ENCODE measurements at regions of chr9 and their contacts with region 1.

Region 1: GRCh38 chr9:21576331-21577189 is 94.4 kb upstream of the IFNE start:
- DNase-seq: peak in 28 of 35 experiments; percentile 15 to 65 (median 42)
- ATAC-seq: peak; percentile 69 to 88 (median 74)
- H3K4me3 ChIP-seq: no peak overlapping the region
- H3K4me3 Mint-ChIP-seq: peak overlapping the region; percentile 25 to 59 (median 37)
- H3K27ac ChIP-seq: peak overlapping the region; percentile 61
- H3K27ac Mint-ChIP-seq: peak overlapping the region; percentile 89
- H3K4me1 ChIP-seq: peaks cover 4 to 30% of the 10 kb centered on the region in 2 experiments
- H3K4me1 Mint-ChIP-seq: peaks cover 38 to 41% (median 39%) of the 10 kb centered on the region in 3 donors
- H3K27me3 ChIP-seq: no peaks in the 10 kb centered on the region
- H3K27me3 Mint-ChIP-seq: no peaks in the 10 kb centered on the region

Region 2: DNA sequence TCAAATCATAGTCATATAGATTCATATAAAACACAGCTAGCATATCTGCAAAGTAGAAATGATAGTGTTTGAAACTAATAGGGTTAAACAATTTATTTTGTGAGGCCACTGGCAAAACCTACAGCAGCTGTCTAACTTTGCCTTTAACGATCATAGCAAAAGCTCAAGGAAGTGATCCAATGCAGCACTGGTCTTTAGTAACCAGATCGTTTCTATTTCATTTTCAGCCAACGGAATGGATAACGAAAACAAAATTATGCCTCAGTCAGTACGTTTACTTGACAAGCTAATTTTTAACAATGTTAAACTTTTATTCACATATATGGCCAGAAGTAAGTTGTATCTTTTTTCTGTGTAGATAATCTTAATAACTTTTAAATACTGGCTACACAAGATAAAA is 972.0 kb before region 1 on chr9:
- CTCF ChIA-PET with region 1: no interaction called
- POLR2A ChIA-PET with region 1: interaction called in 1 of 2 experiments, 12 read pairs
- DNase-seq: peak in 1 of 35 experiments; percentile 37
- ATAC-seq: peak in 2 of 4 experiments; percentile 45 to 79
- H3K4me3 ChIP-seq: no peak overlapping the region
- H3K4me3 Mint-ChIP-seq: peak overlapping the region; percentile 31 to 39 (median 38)
- H3K27ac ChIP-seq: no peak overlapping the region
- H3K27ac Mint-ChIP-seq: peak overlapping the region; percentile 31 to 49
- H3K4me1 ChIP-seq: peaks cover 2 to 25% of the 10 kb centered on the region in 2 experiments
- H3K4me1 Mint-ChIP-seq: peaks cover 86 to 93% (median 87%) of the 10 kb centered on the region in 3 donors
- H3K27me3 ChIP-seq: no peaks in the 10 kb centered on the region
- H3K27me3 Mint-ChIP-seq: no peaks in the 10 kb centered on the region

Region 3: GRCh38 chr9:20722221-20722620 is 854.3 kb before region 1 on chr9:
- CTCF ChIA-PET with region 1: no interaction called
- POLR2A ChIA-PET with region 1: interaction called in 1 of 2 experiments, 12 read pairs
- DNase-seq: no peak
- ATAC-seq: no peak
- H3K4me3 ChIP-seq: no peak overlapping the region
- H3K4me3 Mint-ChIP-seq: no peak overlapping the region
- H3K27ac ChIP-seq: no peak overlapping the region
- H3K27ac Mint-ChIP-seq: peak overlapping the region in 1 of 2 donors; percentile 21
- H3K4me1 ChIP-seq: peaks cover 0 to 6% of the 10 kb centered on the region in 2 experiments
- H3K4me1 Mint-ChIP-seq: peaks cover 22 to 26% (median 25%) of the 10 kb centered on the region in 3 donors
- H3K27me3 ChIP-seq: no peaks in the 10 kb centered on the region
- H3K27me3 Mint-ChIP-seq: no peaks in the 10 kb centered on the region

Region 4: DNA sequence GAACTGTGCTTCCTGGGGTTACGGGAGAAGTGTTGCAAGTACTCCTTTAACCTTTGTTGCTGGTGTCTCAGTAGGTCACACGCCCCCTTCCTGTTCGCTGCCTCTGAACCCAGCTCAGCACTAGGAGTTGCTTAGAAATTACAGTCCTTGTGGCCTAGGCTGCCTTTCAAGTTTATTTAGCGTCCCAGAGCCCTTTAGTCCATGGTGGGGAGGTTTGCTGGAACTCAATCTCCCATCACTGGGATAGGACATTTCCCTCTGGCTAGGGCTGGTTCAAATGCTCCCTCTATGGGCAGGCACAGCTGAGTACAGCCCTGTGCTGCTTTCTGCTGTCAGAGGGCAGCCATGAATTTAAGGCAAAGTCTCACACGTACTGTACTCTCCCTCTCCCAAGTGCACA is 162.9 kb before region 1 on chr9:
- CTCF ChIA-PET with region 1: no interaction called
- POLR2A ChIA-PET with region 1: no interaction called
- DNase-seq: peak in 5 of 35 experiments; percentile 0 to 33 (median 13)
- ATAC-seq: peak; percentile 43 to 85 (median 68)
- H3K4me3 ChIP-seq: no peak overlapping the region
- H3K4me3 Mint-ChIP-seq: no peak overlapping the region
- H3K27ac ChIP-seq: no peak overlapping the region
- H3K27ac Mint-ChIP-seq: no peak overlapping the region
- H3K4me1 ChIP-seq: peaks cover 0 to 4% of the 10 kb centered on the region in 2 experiments
- H3K4me1 Mint-ChIP-seq: peaks cover 0 to 10% (median 7%) of the 10 kb centered on the region in 3 donors
- H3K27me3 ChIP-seq: peaks cover 0 to 4% of the 10 kb centered on the region in 2 experiments
- H3K27me3 Mint-ChIP-seq: peaks cover 11 to 16% of the 10 kb centered on the region in 2 donors

Region 5: GRCh38 chr9:21626493-21626892 is 49.9 kb after region 1 on chr9:
- CTCF ChIA-PET with region 1: no interaction called
- POLR2A ChIA-PET with region 1: no interaction called
- DNase-seq: no peak
- ATAC-seq: no peak
- H3K4me3 ChIP-seq: no peak overlapping the region
- H3K4me3 Mint-ChIP-seq: no peak overlapping the region
- H3K27ac ChIP-seq: no peak overlapping the region
- H3K27ac Mint-ChIP-seq: no peak overlapping the region
- H3K4me1 ChIP-seq: peaks cover 0 to 6% of the 10 kb centered on the region in 2 experiments
- H3K4me1 Mint-ChIP-seq: peaks cover 11 to 16% (median 14%) of the 10 kb centered on the region in 3 donors
- H3K27me3 ChIP-seq: peaks cover 0 to 12% of the 10 kb centered on the region in 2 experiments
- H3K27me3 Mint-ChIP-seq: peaks cover 0 to 6% of the 10 kb centered on the region in 2 donors

Measured in T-cell (primary cell).